ENCODE measurements at regions of chr10 and their contacts with region 1.

Region 1: GRCh38 chr10:30404540-30404939 is 29.4 kb upstream of the MAP3K8 start:
- DNase-seq: no peak
- ATAC-seq: no peak
- H3K4me3 ChIP-seq: no peak overlapping the region
- H3K27ac ChIP-seq: no peak overlapping the region
- H3K4me1 ChIP-seq: no peaks in the 10 kb centered on the region
- H3K27me3 ChIP-seq: no peaks in the 10 kb centered on the region

Region 2: DNA sequence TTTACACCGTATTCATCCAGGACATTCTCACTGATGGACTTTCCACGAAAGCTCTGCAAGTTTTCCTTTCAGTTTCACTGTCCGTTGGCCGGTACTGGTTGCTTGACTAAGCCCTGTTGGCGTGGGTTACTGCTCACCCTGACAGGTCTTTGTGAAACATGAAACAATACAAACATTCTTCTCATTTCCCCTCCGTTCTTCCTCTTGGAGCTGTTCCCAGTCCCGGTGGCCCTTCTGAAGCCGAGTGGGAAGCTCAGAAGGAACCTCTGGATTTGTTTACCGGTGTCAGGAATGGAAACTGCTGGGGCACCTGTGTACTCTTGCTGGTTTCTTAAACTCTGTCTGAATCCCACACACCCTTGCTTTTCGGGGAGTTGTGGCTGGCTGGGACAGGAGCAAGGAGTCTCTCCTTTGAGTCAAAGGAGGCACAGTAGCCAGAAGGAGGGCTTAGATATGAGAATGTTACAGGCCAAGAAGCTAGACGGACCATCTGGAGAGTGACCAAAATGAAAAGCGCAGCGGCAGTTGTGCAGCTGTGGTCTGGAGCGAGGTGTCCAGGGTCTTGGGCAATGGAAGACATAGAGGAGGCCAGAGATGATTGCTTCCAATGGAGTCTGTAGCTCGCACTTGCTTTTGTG is 179.4 kb after region 1 on chr10:
- intact Hi-C with region 1: loop called in 1 of 4 experiments (anchors 5 kb)
- DNase-seq: peak; percentile 59 to 81 (median 73)
- ATAC-seq: peak; percentile 88 to 94
- H3K4me3 ChIP-seq: peak overlapping the region; percentile 58
- H3K27ac ChIP-seq: peak overlapping the region; percentile 95
- H3K4me1 ChIP-seq: peaks cover 5% of the 10 kb centered on the region
- H3K27me3 ChIP-seq: no peaks in the 10 kb centered on the region

Region 3: DNA sequence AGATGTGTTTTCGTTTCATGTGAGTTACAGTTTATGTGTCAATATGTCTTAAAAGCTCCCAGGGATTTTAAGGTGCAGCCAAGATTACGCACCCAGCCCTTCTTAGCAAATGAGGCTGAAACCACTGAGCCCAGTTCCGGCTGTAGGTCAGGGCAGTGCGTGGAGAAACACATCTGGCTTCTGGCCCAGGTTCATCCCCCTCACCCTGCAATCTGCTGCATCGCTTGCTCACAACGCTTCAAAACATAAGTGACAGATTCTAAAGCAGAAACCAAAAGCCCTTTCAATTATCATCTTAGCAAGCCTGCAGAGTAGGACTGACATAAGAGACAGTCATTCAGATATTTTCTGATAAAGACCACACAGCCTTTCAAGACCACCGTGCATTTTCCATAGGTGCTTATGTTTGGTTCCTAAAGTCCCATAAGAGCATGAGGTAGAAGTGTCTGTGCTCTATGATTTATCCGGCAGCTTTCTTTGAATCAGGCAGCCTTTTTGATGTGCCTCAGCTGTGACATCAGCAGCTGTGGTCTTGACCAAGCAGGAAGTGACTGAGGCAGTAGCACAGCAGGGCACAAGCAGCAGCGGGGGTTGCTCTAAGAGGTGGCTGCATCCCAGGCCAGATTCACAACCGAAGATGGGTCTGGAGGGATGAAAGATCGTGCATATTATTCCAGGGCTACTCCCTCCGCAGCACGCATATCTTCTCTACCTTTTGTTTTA is 297.1 kb after region 1 on chr10:
- intact Hi-C with region 1: no loop called
- DNase-seq: no peak
- ATAC-seq: peak; percentile 56 to 74
- H3K4me3 ChIP-seq: no peak overlapping the region
- H3K27ac ChIP-seq: no peak overlapping the region
- H3K4me1 ChIP-seq: no peaks in the 10 kb centered on the region
- H3K27me3 ChIP-seq: no peaks in the 10 kb centered on the region

Measured in right cardiac atrium (tissue), 5 donors.